Endothelial cell of umbilical vein (primary cell): ENCODE measurements at regions of chr9 and their contacts with region 1.

Region 1: DNA sequence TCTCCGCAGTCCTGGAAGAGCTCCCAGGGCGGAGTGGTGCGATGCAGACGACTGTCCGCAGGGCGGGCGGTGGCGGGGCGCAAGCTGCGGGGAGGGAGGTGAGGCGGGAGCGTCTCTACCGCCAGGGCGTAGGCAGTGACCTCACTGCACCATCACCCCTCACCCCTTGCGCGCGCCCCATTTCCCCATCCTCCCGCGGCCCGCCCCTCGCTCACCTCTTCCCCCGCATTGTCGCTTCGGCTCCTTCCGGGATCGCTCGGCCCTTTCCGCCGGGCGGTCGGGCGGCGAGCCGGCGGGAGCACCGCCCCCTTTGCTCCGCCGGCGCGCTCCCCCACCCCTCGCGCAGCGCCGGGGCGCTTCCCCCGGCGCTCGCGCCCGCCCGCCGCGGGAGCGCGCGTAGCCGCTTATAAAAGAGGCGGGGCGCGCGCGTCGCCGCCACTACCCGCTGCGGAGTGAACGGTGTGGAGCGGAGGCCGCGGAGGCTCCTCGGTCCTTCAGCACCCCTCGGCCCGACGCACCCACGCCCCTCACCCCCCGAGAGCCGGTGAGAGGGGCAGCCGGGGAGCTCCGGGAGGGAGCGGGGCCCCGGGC is at the start of gene SPTAN1:
- DNase-seq: peak; percentile 89
- H3K4me3 ChIP-seq: peak within 1 kb of the TSS; percentile 78 to 99 (median 92)
- H3K27ac ChIP-seq: peak within 1 kb of the TSS; percentile 74
- H3K4me1 ChIP-seq: peaks cover 52% of the 10 kb centered on the region
- H3K27me3 ChIP-seq: no peaks in the 10 kb centered on the region
- CTCF ChIP-seq: no peak
- POLR2A ChIP-seq: peak; percentile 99
- total RNA-seq, gene SPTAN1: 478 and 502 TPM in 2 replicates

Region 2: GRCh38 chr9:128296337-128297220 is 255.7 kb before region 1 on chr9:
- CTCF ChIA-PET with region 1: no interaction called
- POLR2A ChIA-PET with region 1: no interaction called
- dilution Hi-C with region 1: no loop called
- intact Hi-C with region 1: loop called (anchors 10 kb)
- DNase-seq: no peak
- H3K4me3 ChIP-seq: no peak overlapping the region
- H3K27ac ChIP-seq: no peak overlapping the region
- H3K4me1 ChIP-seq: peaks cover 6% of the 10 kb centered on the region
- H3K27me3 ChIP-seq: no peaks in the 10 kb centered on the region
- CTCF ChIP-seq: no peak
- POLR2A ChIP-seq: no peak

Region 3: DNA sequence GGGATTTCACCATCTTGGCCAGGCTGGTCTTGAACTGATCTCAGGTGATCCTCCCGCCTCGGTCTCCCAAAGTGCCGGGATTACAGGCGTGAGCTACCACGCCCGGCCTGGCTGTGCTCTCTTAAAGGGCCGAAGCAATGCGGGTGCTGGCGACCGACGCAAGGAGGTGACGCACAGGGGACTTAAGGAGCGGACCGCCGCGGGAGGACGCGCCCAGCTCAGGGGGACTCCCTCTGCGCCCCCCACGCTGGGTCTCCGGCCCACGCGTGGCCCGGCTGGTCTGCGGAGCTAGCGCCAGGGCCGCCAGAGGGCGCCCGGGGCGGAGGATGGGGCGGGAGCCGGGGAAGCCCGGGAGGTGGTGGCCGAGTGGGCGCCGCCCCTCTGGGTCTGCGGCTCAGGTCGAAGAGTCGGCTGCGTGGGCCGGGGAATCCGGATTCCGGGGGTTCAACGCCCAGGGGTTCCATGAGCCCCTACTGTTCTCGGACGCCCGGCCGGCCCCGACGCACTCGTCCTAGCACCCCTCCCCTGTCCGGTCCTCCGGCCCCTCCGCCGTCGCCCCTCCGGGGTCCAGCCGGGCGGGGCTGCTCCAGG is 132.1 kb before region 1 on chr9:
- CTCF ChIA-PET with region 1: interaction called, 13 read pairs
- POLR2A ChIA-PET with region 1: interaction called, 4 read pairs
- dilution Hi-C with region 1: no loop called
- intact Hi-C with region 1: no loop called
- DNase-seq: peak; percentile 63
- H3K4me3 ChIP-seq: peak overlapping the region; percentile 53 to 65 (median 59)
- H3K27ac ChIP-seq: no peak overlapping the region
- H3K4me1 ChIP-seq: peaks cover 13% of the 10 kb centered on the region
- H3K27me3 ChIP-seq: peaks cover 6 to 9% of the 10 kb centered on the region in 2 experiments
- CTCF ChIP-seq: peak; percentile 85 to 89
- POLR2A ChIP-seq: peak; percentile 28

Region 4: GRCh38 chr9:128455849-128456612 is 96.2 kb before region 1 on chr9 and contains the start of gene ODF2:
- CTCF ChIA-PET with region 1: no interaction called
- POLR2A ChIA-PET with region 1: interaction called, 6 read pairs
- dilution Hi-C with region 1: no loop called
- intact Hi-C with region 1: loop called (anchors 1 kb)
- DNase-seq: peak; percentile 95
- H3K4me3 ChIP-seq: peak within 1 kb of the TSS; percentile 50 to 66 (median 55)
- H3K27ac ChIP-seq: peak within 1 kb of the TSS; percentile 64
- H3K4me1 ChIP-seq: peaks cover 7% of the 10 kb centered on the region
- H3K27me3 ChIP-seq: no peaks in the 10 kb centered on the region
- CTCF ChIP-seq: no peak
- POLR2A ChIP-seq: peak; percentile 86
- total RNA-seq, gene ODF2: 49.5 and 50.5 TPM in 2 replicates

Region 5: DNA sequence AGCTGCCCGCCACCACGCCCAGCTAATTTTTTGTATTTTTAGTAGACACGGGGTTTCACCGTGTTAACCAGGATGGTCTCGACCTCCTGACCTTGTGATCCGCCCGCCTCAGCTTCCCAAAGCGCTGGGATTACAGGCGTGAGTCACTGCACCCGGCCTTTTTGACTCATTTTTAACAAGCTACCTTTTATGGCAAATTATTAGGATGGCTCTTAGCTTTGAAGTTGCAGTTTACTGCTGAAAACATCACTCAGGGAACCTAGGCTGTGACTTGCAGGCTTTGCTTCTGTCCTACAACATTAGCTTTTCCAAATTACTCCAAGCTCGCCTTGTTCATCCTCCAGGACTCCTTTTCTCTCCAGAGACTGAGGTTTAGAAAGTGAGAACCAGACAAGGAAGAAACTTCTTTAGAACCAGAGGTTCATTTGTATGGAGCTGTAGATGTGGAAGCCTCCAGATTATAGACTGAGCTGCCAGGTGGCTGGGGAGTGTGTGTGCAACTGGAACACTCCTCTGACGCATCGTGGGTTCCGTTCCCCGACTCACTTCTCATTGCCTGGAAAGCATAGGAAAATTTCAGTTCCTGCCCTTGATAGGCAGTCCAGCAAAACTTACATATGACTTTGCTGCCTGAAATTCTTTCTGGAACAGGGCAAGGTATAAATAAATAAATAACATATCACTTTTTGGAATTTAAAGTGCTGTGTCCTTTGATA is 23.6 kb before region 1 on chr9:
- CTCF ChIA-PET with region 1: interaction called, 11 read pairs
- POLR2A ChIA-PET with region 1: interaction called, 5 read pairs
- dilution Hi-C with region 1: no loop called
- intact Hi-C with region 1: no loop called
- DNase-seq: peak; percentile 17
- H3K4me3 ChIP-seq: no peak overlapping the region
- H3K27ac ChIP-seq: peak overlapping the region; percentile 25
- H3K4me1 ChIP-seq: peaks cover 16% of the 10 kb centered on the region
- H3K27me3 ChIP-seq: no peaks in the 10 kb centered on the region
- CTCF ChIP-seq: no peak
- POLR2A ChIP-seq: no peak

Region 6: GRCh38 chr9:128565578-128565977 is 13.3 kb after region 1 on chr9:
- CTCF ChIA-PET with region 1: interaction called, 8 read pairs
- POLR2A ChIA-PET with region 1: interaction called, 13 read pairs
- dilution Hi-C with region 1: no loop called
- intact Hi-C with region 1: loop called (anchors 2 kb)
- DNase-seq: peak; percentile 83
- H3K4me3 ChIP-seq: peak overlapping the region in 1 of 3 experiments; percentile 41
- H3K27ac ChIP-seq: peak overlapping the region; percentile 44
- H3K4me1 ChIP-seq: peaks cover 22% of the 10 kb centered on the region
- H3K27me3 ChIP-seq: no peaks in the 10 kb centered on the region
- CTCF ChIP-seq: no peak
- POLR2A ChIP-seq: peak; percentile 30

Region 7: DNA sequence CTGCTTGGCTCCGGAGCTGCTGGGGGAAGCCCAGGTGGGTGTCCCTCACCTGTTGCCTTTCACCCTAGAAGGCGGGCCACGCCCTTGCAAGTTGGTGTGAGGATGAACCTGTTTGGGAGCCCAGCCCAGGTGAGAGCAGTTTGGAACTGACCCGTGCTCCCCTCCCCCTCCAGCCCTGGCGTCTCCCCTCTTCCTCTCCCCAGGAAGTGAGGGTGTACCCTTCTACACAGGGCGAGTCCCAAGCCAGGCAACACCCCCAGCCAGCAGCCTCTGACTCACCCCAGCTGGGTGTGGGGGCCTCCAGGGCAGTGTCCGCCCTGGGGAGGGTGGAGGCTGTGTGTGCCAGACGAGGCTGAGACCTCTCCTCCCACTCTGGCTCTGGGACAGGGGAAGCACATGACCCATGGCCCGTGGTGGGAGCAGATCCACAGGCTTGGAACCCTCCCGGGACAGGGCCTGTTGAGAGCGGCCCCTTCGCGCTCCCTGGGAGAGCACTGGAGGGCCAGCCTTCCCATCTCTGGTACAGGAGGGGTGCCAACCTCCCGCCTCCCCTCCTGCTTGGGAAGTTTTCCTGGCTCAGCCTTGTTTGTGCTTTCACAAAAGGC is 340.2 kb after region 1 on chr9:
- CTCF ChIA-PET with region 1: no interaction called
- POLR2A ChIA-PET with region 1: no interaction called
- dilution Hi-C with region 1: no loop called
- intact Hi-C with region 1: no loop called
- DNase-seq: peak; percentile 82
- H3K4me3 ChIP-seq: no peak overlapping the region
- H3K27ac ChIP-seq: peak overlapping the region; percentile 75
- H3K4me1 ChIP-seq: peaks cover 34% of the 10 kb centered on the region
- H3K27me3 ChIP-seq: no peaks in the 10 kb centered on the region
- CTCF ChIP-seq: no peak
- POLR2A ChIP-seq: no peak